Naive thymus-derived CD4-positive, alpha-beta T cell (primary cell): ENCODE measurements at regions of chr6 and their contacts with region 1.

Region 1: GRCh38 chr6:52399511-52400312 is 20.4 kb upstream of the EFHC1 start:
- DNase-seq: peak in 7 of 9 donors; percentile 21 to 60 (median 48)
- ATAC-seq: peak; percentile 58
- H3K4me3 ChIP-seq: no peak overlapping the region
- H3K4me3 Mint-ChIP-seq: peak overlapping the region; percentile 26 to 84 (median 74)
- H3K27ac ChIP-seq: peak overlapping the region; percentile 89
- H3K27ac Mint-ChIP-seq: peak overlapping the region; percentile 91 to 100 (median 96)
- H3K4me1 ChIP-seq: peaks cover 48 to 70% of the 10 kb centered on the region in 2 donors
- H3K4me1 Mint-ChIP-seq: peaks cover 40 to 96% (median 77%) of the 10 kb centered on the region in 7 donors
- H3K27me3 ChIP-seq: no peaks in the 10 kb centered on the region
- H3K27me3 Mint-ChIP-seq: peaks cover 0 to 3% (median 0%) of the 10 kb centered on the region in 5 donors

Region 2: GRCh38 chr6:52000064-52000463 is 399.6 kb before region 1 on chr6:
- CTCF ChIA-PET with region 1: no interaction called
- POLR2A ChIA-PET with region 1: no interaction called
- intact Hi-C with region 1: no loop called
- DNase-seq: no peak
- ATAC-seq: no peak
- H3K4me3 ChIP-seq: no peak overlapping the region
- H3K4me3 Mint-ChIP-seq: no peak overlapping the region
- H3K27ac ChIP-seq: no peak overlapping the region
- H3K27ac Mint-ChIP-seq: no peak overlapping the region
- H3K4me1 ChIP-seq: no peaks in the 10 kb centered on the region
- H3K4me1 Mint-ChIP-seq: no peaks in the 10 kb centered on the region
- H3K27me3 ChIP-seq: peaks cover 0 to 3% of the 10 kb centered on the region in 2 donors
- H3K27me3 Mint-ChIP-seq: peaks cover 7 to 31% (median 24%) of the 10 kb centered on the region in 5 donors

Region 3: DNA sequence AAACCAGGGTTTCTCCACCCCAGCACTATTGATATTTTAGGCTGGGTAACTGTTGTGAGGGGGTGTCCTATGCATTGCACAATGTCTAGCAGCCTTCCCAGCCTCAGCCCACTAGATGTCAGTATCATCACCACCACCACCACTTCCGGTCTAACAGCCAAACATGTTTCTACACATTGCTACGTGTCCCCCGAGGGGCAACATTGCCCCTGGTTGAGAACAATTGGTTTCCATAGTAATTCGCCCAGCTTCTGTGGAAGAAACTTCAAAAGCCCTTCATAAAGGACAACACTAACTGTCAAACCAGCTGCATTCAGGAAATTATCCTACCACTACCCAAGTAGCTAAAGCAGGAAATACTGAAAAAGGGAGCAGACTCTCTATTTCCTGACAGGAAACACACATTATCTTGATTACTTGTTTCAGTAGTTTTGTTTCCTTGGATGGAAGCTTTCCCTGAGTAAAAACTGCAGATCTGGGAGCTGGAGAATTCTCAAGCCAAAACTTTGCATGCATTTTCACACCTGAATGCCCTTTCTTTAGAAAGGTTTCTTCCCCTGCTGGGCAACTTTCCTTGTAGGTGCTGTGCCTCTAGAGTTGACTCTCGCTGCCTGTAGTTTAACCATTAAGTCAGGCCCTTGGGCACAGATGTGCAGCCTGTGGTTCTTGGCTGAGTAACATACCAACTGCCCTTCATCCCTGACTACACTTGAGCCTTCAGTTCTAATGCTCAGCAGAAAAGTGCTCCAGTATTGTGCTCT is 335.9 kb before region 1 on chr6:
- CTCF ChIA-PET with region 1: no interaction called
- POLR2A ChIA-PET with region 1: no interaction called
- intact Hi-C with region 1: loop called in 1 of 2 experiments (anchors 5 kb)
- DNase-seq: peak in 8 of 9 donors; percentile 33 to 70 (median 64)
- ATAC-seq: peak; percentile 93
- H3K4me3 ChIP-seq: peak overlapping the region; percentile 48
- H3K4me3 Mint-ChIP-seq: peak overlapping the region; percentile 44 to 91 (median 81)
- H3K27ac ChIP-seq: peak overlapping the region; percentile 40
- H3K27ac Mint-ChIP-seq: peak overlapping the region; percentile 39 to 90 (median 81)
- H3K4me1 ChIP-seq: peaks cover 12 to 13% of the 10 kb centered on the region in 2 donors
- H3K4me1 Mint-ChIP-seq: peaks cover 4 to 18% (median 13%) of the 10 kb centered on the region in 7 donors
- H3K27me3 ChIP-seq: no peaks in the 10 kb centered on the region
- H3K27me3 Mint-ChIP-seq: peaks cover 0 to 23% (median 1%) of the 10 kb centered on the region in 5 donors

Region 4: DNA sequence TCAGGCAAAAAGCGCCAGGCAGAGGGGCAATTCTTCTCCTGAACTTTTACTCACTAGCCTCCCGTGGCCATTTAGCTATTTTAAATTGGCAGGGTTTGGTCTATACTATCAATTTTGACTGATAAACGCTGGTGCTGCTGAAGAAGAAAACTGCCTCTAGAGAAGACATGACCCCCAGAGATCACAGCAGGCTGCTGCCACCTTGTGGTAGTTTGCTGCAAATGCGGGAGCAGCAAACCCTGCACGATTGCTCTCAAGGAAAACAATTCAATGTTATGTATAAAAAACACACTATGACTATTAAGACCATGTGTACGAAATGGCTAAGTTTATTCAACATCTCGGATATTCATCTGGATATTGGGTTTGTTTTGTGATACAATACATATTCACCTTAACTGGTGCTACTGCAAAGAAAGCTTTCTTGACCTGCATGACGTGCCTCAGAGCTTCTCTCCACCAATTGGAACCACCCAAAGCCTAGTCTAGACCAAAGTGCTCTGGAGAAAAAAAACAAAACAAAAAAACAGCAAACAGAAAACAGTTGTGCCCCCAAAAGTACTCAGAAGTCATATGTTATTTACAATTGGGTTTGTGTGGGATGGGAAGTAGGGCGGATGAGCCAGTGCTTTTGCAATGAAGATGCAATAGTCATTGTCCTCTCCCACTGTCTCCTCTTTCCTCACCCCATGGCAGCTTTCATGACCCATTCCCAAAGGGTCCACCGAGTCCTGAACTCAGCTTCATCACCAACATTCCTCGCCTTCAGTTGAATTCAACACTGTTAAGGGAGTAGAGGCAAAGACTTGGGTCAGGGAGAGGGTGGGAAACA is 135.8 kb before region 1 on chr6:
- CTCF ChIA-PET with region 1: no interaction called
- POLR2A ChIA-PET with region 1: no interaction called
- intact Hi-C with region 1: loop called in 1 of 2 experiments (anchors 1 kb)
- DNase-seq: peak; percentile 42 to 73 (median 64)
- ATAC-seq: peak; percentile 91
- H3K4me3 ChIP-seq: no peak overlapping the region
- H3K4me3 Mint-ChIP-seq: peak overlapping the region in 4 of 10 donors; percentile 25 to 44 (median 40)
- H3K27ac ChIP-seq: no peak overlapping the region
- H3K27ac Mint-ChIP-seq: peak overlapping the region in 7 of 9 donors; percentile 1 to 90 (median 18)
- H3K4me1 ChIP-seq: peaks cover 0 to 3% of the 10 kb centered on the region in 2 donors
- H3K4me1 Mint-ChIP-seq: peaks cover 3 to 19% (median 15%) of the 10 kb centered on the region in 7 donors
- H3K27me3 ChIP-seq: no peaks in the 10 kb centered on the region
- H3K27me3 Mint-ChIP-seq: no peaks in the 10 kb centered on the region

Region 5: GRCh38 chr6:52337633-52338290 is 62.0 kb before region 1 on chr6:
- CTCF ChIA-PET with region 1: interaction called, 3 read pairs
- POLR2A ChIA-PET with region 1: interaction called, 4 read pairs
- intact Hi-C with region 1: loop called in 1 of 2 experiments (anchors 1 kb)
- DNase-seq: no peak
- ATAC-seq: no peak
- H3K4me3 ChIP-seq: no peak overlapping the region
- H3K4me3 Mint-ChIP-seq: peak overlapping the region in 2 of 10 donors; percentile 8 to 68
- H3K27ac ChIP-seq: no peak overlapping the region
- H3K27ac Mint-ChIP-seq: peak overlapping the region in 8 of 9 donors; percentile 11 to 94 (median 46)
- H3K4me1 ChIP-seq: peaks cover 28 to 58% of the 10 kb centered on the region in 2 donors
- H3K4me1 Mint-ChIP-seq: peaks cover 45 to 79% (median 75%) of the 10 kb centered on the region in 7 donors
- H3K27me3 ChIP-seq: no peaks in the 10 kb centered on the region
- H3K27me3 Mint-ChIP-seq: no peaks in the 10 kb centered on the region

Region 6: DNA sequence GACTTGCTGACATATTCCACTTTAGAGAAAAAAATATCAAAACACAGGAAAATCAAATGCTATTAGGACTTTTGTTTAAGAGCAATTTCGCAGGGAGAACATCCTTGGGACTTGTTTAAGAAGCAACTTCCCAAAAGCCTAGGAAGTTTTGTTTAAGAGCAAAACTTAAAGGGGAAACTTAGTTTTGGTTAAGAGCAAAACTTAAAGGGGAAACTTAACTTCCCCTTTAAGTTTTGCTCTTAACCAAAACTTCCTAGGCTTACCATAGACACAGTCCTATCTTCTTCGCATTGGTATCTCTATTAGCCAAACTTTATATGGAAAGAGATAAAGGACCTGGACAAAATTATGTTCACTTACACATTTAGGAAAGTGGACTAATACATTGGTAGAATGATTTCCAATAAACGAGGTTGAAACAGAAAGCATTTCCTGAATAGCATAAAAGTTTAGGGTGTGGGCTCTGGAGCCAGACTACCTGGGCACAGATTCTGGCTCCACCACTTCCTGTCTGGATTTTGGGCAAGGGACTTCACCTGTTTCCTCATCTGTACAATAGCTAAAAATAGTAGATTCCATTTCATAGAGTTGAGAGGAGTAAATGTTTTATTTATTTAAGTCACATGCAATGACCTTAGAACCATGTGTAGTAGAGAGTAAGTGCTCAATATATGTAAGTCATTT is 22.0 kb before region 1 on chr6:
- CTCF ChIA-PET with region 1: interaction called, 4 read pairs
- POLR2A ChIA-PET with region 1: interaction called, 12 read pairs
- intact Hi-C with region 1: loop called in 1 of 2 experiments (anchors 1 kb)
- DNase-seq: peak in 3 of 9 donors; percentile 34 to 50 (median 36)
- ATAC-seq: peak; percentile 29
- H3K4me3 ChIP-seq: no peak overlapping the region
- H3K4me3 Mint-ChIP-seq: peak overlapping the region; percentile 22 to 87 (median 63)
- H3K27ac ChIP-seq: peak overlapping the region; percentile 52
- H3K27ac Mint-ChIP-seq: peak overlapping the region; percentile 51 to 96 (median 87)
- H3K4me1 ChIP-seq: peaks cover 10 to 54% of the 10 kb centered on the region in 2 donors
- H3K4me1 Mint-ChIP-seq: peaks cover 50 to 86% (median 82%) of the 10 kb centered on the region in 7 donors
- H3K27me3 ChIP-seq: no peaks in the 10 kb centered on the region
- H3K27me3 Mint-ChIP-seq: no peaks in the 10 kb centered on the region

Region 7: GRCh38 chr6:52640170-52640569 is 240.5 kb after region 1 on chr6:
- CTCF ChIA-PET with region 1: no interaction called
- POLR2A ChIA-PET with region 1: no interaction called
- intact Hi-C with region 1: no loop called
- DNase-seq: no peak
- ATAC-seq: no peak
- H3K4me3 ChIP-seq: no peak overlapping the region
- H3K4me3 Mint-ChIP-seq: no peak overlapping the region
- H3K27ac ChIP-seq: no peak overlapping the region
- H3K27ac Mint-ChIP-seq: no peak overlapping the region
- H3K4me1 ChIP-seq: no peaks in the 10 kb centered on the region
- H3K4me1 Mint-ChIP-seq: peaks cover 0 to 12% (median 4%) of the 10 kb centered on the region in 7 donors
- H3K27me3 ChIP-seq: no peaks in the 10 kb centered on the region
- H3K27me3 Mint-ChIP-seq: peaks cover 15 to 24% (median 17%) of the 10 kb centered on the region in 5 donors

Region 8: GRCh38 chr6:53335208-53335994 is 935.7 kb after region 1 on chr6:
- CTCF ChIA-PET with region 1: no interaction called
- POLR2A ChIA-PET with region 1: no interaction called
- intact Hi-C with region 1: loop called (anchors 5 to 10 kb)
- DNase-seq: peak; percentile 47 to 87 (median 75)
- ATAC-seq: peak; percentile 85
- H3K4me3 ChIP-seq: peak overlapping the region; percentile 50
- H3K4me3 Mint-ChIP-seq: peak overlapping the region; percentile 83 to 95 (median 88)
- H3K27ac ChIP-seq: peak overlapping the region; percentile 88
- H3K27ac Mint-ChIP-seq: peak overlapping the region; percentile 98 to 100 (median 99)
- H3K4me1 ChIP-seq: peaks cover 72 to 74% of the 10 kb centered on the region in 2 donors
- H3K4me1 Mint-ChIP-seq: peaks cover 54 to 95% (median 92%) of the 10 kb centered on the region in 7 donors
- H3K27me3 ChIP-seq: no peaks in the 10 kb centered on the region
- H3K27me3 Mint-ChIP-seq: no peaks in the 10 kb centered on the region